ENCODE measurements at regions of chr16 and their contacts with region 1.

Region 1: DNA sequence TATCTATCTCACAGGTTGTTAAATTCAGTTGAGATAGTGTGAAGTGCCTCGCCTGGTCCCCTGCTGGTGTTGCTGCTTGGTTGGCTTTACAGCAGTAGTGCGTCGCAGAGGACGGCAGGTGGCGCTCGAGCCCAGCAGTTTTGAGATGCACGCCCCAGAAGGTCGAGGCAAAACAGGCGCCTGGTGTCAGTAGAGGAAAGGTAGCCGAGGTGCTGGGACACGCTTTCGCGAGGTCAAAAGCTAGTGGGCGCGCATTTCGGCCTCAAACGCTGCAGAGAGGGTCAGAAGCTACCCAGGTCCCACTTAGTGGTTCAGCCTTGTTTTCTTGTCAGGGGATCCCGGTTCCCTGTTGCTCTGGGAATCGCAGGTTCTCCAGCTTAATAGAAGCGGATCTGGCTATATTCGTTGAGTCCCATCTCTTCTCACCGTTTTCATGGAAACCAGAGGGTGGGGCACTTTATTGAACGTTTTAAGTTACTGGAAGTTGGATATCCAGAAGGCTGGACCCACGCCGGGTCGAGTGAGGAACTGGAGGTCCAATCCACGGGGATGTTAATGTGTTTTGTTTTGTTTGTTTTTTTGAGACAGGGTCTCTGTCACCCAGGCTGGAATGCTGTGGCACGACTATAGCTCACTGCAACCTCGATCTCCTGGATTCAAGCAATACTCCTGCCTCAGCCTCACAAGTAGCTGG is 10.3 kb upstream of the ZFP90 start:
- H3K4me3 Mint-ChIP-seq: no peak overlapping the region
- H3K27ac Mint-ChIP-seq: no peak overlapping the region
- H3K4me1 Mint-ChIP-seq: peaks cover 23% of the 10 kb centered on the region
- H3K27me3 Mint-ChIP-seq: peaks cover 44% of the 10 kb centered on the region

Region 2: GRCh38 chr16:68538880-68539701 is 10.3 kb after region 1 on chr16 and contains the start of gene ZFP90:
- intact Hi-C with region 1: loop called (anchors 1 kb)
- H3K4me3 Mint-ChIP-seq: peak within 1 kb of the TSS; percentile 93
- H3K27ac Mint-ChIP-seq: peak within 1 kb of the TSS; percentile 90
- H3K4me1 Mint-ChIP-seq: peaks cover 7% of the 10 kb centered on the region
- H3K27me3 Mint-ChIP-seq: no peaks in the 10 kb centered on the region

Region 3: DNA sequence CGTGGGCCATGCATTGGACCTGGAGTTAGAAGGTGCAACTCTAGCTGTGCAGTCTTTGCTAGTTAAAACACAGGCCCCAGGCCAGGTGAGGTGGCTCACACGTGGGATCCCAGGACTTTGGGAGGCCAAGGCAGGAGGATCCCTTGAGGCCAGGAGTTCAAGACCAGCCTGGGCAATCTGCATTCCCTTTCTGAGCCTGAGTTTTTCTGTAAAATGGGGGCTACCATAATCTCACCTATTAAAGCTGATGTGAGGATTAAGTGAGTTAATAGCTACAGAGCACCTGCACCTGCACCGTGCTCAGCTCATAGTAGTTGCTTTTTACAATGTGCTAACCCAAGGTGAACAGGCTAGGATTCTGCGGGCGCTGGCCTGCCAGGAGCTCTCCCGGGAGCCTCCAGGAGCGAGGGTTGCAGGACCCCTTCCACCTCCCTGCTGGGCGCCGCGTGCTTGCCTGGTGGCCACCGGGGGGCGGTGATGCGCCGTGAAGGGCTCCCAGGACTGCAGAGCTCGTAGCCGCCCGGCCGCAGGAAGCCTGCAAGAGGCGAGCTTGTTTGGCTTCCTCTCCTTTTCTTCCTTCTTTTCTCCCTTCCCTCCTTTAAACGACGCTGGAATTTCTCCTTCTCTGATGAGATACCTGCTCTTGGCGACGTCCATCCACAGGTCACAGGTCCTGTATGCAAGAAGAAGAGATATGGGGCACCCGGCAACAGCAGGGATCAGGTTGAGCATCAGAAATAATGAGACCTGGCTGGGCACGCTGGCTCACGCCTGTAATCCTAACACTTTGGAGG is 61.6 kb after region 1 on chr16:
- intact Hi-C with region 1: loop called (anchors 2 kb)
- H3K4me3 Mint-ChIP-seq: no peak overlapping the region
- H3K27ac Mint-ChIP-seq: no peak overlapping the region
- H3K4me1 Mint-ChIP-seq: peaks cover 5% of the 10 kb centered on the region
- H3K27me3 Mint-ChIP-seq: peaks cover 10% of the 10 kb centered on the region

Region 4: DNA sequence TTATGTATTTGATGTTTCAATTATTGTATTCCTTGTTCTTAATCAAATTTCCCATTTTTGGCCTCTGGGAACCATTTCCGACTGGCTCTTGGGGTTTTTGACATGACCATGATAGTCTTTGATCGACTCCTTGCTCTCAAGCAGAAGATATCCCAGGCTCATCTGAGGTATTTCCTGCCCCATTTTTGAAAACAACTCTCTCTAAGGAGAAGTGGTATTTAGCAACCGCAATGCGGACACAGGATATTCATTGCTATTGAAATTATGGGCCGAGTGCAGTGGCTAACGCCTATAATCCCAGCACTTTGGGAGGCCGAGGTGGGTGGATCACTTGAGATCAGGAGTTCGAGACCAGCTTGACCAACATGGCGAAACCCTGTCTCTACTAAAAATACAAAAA is 320.0 kb after region 1 on chr16:
- intact Hi-C with region 1: loop called (anchors 5 kb)
- H3K4me3 Mint-ChIP-seq: no peak overlapping the region
- H3K27ac Mint-ChIP-seq: no peak overlapping the region
- H3K4me1 Mint-ChIP-seq: peaks cover 17% of the 10 kb centered on the region
- H3K27me3 Mint-ChIP-seq: peaks cover 2% of the 10 kb centered on the region

Region 5: DNA sequence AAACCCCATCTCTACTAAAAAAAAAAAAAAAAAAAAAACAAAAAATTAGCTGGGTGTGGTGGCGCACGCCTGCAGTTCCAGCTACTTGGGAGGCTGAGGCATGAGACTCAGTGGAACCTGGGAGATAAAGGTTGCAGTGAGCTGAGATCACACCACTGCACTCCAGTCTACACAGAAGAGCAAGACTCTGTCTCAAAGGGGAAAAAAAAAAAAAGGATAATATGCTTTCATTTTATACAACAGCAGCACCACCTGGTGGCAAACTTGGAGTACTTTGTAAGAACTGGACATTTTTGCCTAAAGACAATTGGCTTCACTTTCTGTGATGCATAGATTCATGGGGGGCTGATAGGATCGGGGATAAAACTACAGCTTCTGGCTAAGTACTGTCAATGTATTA is 595.1 kb after region 1 on chr16:
- intact Hi-C with region 1: loop called (anchors 5 kb)
- H3K4me3 Mint-ChIP-seq: no peak overlapping the region
- H3K27ac Mint-ChIP-seq: no peak overlapping the region
- H3K4me1 Mint-ChIP-seq: peaks cover 12% of the 10 kb centered on the region
- H3K27me3 Mint-ChIP-seq: no peaks in the 10 kb centered on the region

Measured in dendritic cell treated with granulocyte-macrophage colony-stimulating factor and Interleukin-4, amounts not matched to agents 40 ng/mL and 50 ng/mL, for 4 days (primary cell).